HCT116 (cell line): ENCODE measurements at regions of chr5 and their contacts with region 1.

Region 1: DNA sequence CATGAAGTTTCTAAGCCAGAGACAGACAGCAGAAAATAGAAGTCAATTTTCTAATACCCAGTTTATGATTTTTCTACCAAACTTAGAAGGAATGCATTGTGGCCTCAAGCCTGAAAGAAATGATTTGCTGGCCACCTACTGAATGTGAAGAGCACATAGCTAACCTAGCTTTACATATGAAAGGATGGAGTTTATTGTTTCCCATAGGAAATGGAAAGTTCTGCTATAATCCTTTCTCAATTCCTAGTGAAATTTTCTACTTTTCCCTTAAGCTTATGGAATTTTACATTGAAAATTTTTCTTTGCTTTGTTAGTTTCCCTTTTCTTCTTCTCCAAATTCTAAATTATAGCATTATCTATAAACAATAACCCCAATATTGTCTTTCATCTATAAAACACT is 110.1 kb downstream of the TMEM167A start:
- DNase-seq: no peak
- ATAC-seq: no peak
- H3K4me3 ChIP-seq: no peak overlapping the region
- H3K27ac ChIP-seq: peak overlapping the region; percentile 82; the same call in 1 of the 2 replicates
- H3K4me1 ChIP-seq: peaks cover 27 to 87% of the 10 kb centered on the region in 2 experiments
- H3K27me3 ChIP-seq: no peaks in the 10 kb centered on the region
- CTCF ChIP-seq: no peak
- POLR2A ChIP-seq: no peak
- RAD21 ChIP-seq: no peak

Region 2: GRCh38 chr5:82754759-82755158 is 212.3 kb before region 1 on chr5:
- CTCF ChIA-PET with region 1: no interaction called
- POLR2A ChIA-PET with region 1: no interaction called
- RAD21 ChIA-PET with region 1: no interaction called
- intact Hi-C with region 1: no loop called
- DNase-seq: no peak
- ATAC-seq: no peak
- H3K4me3 ChIP-seq: no peak overlapping the region
- H3K27ac ChIP-seq: no peak overlapping the region
- H3K4me1 ChIP-seq: no peaks in the 10 kb centered on the region
- H3K27me3 ChIP-seq: no peaks in the 10 kb centered on the region
- CTCF ChIP-seq: no peak
- POLR2A ChIP-seq: no peak
- RAD21 ChIP-seq: no peak

Region 3: DNA sequence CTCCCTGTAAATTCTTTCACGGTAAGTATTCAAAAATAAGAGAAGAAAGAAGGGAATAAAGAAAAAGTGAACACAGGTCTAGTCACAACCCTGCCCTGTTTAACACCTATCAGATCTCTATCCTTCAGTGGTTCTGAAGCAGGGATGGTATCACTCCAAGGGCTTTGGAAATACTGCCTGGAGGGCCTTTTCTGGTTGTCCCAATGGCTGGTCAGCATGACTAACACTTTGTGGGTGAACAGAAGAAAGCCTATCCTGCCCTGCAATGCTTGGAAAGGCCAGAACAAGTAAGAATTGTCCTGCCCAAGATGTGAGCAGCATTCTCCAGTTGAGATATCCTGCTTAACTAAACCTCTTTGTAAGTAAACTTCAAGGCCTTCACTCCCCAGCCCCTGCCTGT is 14.7 kb before region 1 on chr5:
- CTCF ChIA-PET with region 1: no interaction called
- POLR2A ChIA-PET with region 1: no interaction called
- RAD21 ChIA-PET with region 1: no interaction called
- intact Hi-C with region 1: no loop called
- DNase-seq: no peak
- ATAC-seq: peak; percentile 95
- H3K4me3 ChIP-seq: no peak overlapping the region
- H3K27ac ChIP-seq: peak overlapping the region; percentile 42
- H3K4me1 ChIP-seq: peaks cover 2 to 16% of the 10 kb centered on the region in 2 experiments; a peak in 2 of 4 replicates
- H3K27me3 ChIP-seq: no peaks in the 10 kb centered on the region
- CTCF ChIP-seq: no peak
- POLR2A ChIP-seq: no peak
- RAD21 ChIP-seq: no peak

Region 4: GRCh38 chr5:83095957-83096539 is 129.0 kb after region 1 on chr5:
- CTCF ChIA-PET with region 1: no interaction called
- POLR2A ChIA-PET with region 1: no interaction called
- RAD21 ChIA-PET with region 1: no interaction called
- intact Hi-C with region 1: loop called (anchors 5 kb)
- DNase-seq: peak; percentile 74
- ATAC-seq: peak; percentile 97
- H3K4me3 ChIP-seq: peak overlapping the region; percentile 38 to 48
- H3K27ac ChIP-seq: peak overlapping the region; percentile 66
- H3K4me1 ChIP-seq: peaks cover 44 to 55% of the 10 kb centered on the region in 2 experiments
- H3K27me3 ChIP-seq: no peaks in the 10 kb centered on the region
- CTCF ChIP-seq: no peak
- POLR2A ChIP-seq: no peak
- RAD21 ChIP-seq: no peak

Region 5: DNA sequence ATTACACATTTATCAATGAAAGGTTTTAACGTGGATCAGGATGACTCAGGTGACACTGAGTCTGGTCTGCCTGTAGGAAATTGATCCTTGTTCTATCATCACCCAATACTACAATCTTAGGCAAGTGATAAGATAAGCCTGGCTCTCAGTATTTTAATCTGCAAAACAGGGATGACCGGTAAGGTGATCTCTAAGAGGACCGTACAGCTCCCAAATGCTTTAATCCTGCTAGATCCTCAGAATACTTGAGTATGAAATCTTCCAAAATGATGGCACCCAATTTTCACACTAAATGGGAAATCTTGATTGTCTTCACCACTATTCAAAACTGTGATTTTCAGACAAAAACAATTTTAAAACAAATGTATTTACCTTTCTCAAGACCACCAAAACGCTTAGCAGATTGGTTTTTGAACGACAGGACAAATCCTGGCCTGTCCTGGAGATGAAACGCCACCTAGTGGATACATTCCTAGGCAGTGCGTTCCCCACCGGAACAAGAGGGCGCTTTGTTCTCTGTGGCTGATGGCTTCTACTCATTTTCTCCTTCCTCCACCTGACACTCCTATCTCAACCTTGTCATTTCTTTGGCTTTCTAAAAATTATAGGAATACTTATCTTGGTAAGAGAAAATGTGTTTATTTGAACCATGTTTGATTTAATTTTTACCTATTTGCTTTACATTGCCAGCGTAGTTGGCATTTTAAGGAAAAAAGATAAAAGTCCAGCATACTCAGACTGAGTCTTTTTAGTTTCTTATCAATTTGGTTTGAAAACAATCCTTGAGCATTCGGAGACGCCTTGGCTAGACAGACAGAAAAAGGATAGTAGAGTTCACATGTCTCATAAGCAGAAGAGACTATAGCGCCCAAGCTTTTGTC is 463.3 kb after region 1 on chr5:
- CTCF ChIA-PET with region 1: no interaction called
- POLR2A ChIA-PET with region 1: no interaction called
- RAD21 ChIA-PET with region 1: no interaction called
- intact Hi-C with region 1: loop called (anchors 2 kb)
- DNase-seq: peak; percentile 75
- ATAC-seq: peak; percentile 98
- H3K4me3 ChIP-seq: no peak overlapping the region
- H3K27ac ChIP-seq: no peak overlapping the region
- H3K4me1 ChIP-seq: peaks cover 0 to 10% of the 10 kb centered on the region in 2 experiments; a peak in 2 of 4 replicates
- H3K27me3 ChIP-seq: no peaks in the 10 kb centered on the region
- CTCF ChIP-seq: peak; percentile 92 to 98 (median 96)
- POLR2A ChIP-seq: no peak
- RAD21 ChIP-seq: peak; percentile 91

Region 6: DNA sequence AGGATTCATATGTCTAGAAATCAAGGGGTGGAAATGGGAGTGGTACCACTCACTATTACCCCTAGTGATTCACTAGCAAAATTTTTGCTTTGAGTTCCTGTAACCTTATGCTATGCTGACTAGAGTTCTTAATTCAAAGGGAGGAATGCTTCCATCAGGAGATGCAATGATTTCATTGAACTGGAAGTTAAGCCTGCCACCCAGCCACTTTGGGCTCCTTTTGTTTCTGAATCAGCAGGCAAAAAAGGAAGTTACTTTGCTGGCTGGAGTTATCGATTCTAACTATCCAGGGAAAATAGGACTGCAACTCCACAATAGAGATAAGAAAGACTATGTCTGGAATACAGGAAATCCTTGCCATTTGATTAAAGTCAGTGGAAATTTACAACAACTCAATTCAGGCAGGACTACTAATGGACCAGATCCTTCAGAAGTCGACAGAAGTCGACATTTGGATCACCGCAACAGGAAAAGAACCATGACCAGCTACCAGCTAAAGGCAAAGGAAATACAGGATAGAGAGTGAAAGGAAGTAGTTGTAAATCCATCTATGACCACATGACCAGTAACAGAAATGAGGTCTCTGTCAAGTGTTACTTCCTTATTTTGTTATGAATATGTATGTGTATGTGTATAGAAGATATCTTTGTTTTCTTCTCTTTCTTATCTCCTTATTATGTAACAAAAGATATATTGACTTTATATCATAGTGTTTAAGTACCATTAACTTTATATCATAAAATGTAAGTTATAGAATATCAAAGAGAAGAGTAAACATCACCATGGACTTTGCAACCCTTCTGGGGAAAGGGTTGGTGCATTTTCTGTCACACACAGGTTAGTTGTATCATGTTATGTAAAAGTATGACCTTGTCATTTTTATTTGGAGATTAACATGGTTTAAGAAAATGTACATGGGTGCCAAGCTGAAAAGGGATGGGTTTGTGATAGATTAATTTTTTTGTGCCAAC is 952.3 kb after region 1 on chr5:
- CTCF ChIA-PET with region 1: no interaction called
- POLR2A ChIA-PET with region 1: no interaction called
- RAD21 ChIA-PET with region 1: no interaction called
- intact Hi-C with region 1: no loop called
- DNase-seq: no peak
- ATAC-seq: no peak
- H3K4me3 ChIP-seq: no peak overlapping the region
- H3K27ac ChIP-seq: no peak overlapping the region
- H3K4me1 ChIP-seq: no peaks in the 10 kb centered on the region
- H3K27me3 ChIP-seq: no peaks in the 10 kb centered on the region
- CTCF ChIP-seq: no peak
- POLR2A ChIP-seq: no peak
- RAD21 ChIP-seq: no peak